GM12878 (cell line): ENCODE measurements at regions of chr18 and their contacts with region 1.

Region 1: DNA sequence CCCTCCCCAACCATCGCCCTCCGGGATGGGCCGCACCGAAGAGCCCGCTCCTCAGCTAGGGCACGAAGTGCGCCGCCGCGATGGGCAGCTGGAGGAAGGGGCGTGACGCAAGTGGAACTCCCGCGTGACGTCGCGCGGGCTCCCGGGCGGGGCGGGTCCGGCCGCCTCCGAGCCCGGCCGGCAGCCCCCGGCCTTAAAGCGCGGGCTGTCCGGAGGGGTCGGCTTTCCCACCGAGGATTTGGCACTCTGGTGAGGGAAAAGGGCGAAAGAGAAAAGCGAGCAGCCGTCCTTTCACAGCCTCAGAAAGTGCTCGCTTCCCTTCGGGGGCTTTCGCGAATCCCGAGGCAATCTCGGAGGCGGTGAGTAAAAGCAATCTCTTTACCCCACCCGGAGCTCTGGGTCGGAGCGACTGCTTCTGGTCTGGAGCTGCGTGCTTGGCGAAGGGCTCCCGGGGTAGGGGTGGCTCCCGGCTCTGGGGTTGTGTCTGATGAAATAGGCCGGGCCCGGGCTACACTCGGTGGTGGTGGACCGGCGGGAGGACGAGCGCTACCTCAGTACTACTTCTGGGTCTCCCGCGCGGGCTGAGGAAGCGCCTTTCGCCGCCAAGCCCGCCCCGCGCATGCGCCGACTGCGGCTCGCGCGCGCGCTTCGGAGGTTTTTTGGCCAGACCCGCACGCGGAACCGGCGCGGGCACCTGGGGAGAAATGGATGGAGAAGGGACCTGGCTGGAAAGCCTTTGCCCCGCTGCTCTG is at the start of gene RBBP8:
- DNase-seq: peak; percentile 36
- ATAC-seq: peak; percentile 85
- H3K4me3 ChIP-seq: peak within 1 kb of the TSS; percentile 86
- H3K27ac ChIP-seq: peak within 1 kb of the TSS; percentile 92
- H3K4me1 ChIP-seq: peaks cover 6% of the 10 kb centered on the region
- H3K27me3 ChIP-seq: no peaks in the 10 kb centered on the region
- CTCF ChIP-seq: no peak
- EP300 ChIP-seq: no peak
- POLR2A ChIP-seq: peak; percentile 80
- RAD21 ChIP-seq: no peak
- polyA plus RNA-seq, gene RBBP8: 49.4 to 59.5 TPM

Region 2: GRCh38 chr18:22813648-22814328 is 119.6 kb before region 1 on chr18:
- CTCF ChIA-PET with region 1: interaction called, 19 read pairs
- POLR2A ChIA-PET with region 1: interaction called, 3 read pairs
- RAD21 ChIA-PET with region 1: interaction called, 5 read pairs
- SMC1A ChIA-PET with region 1: interaction called, 8 read pairs
- in situ Hi-C with region 1: no loop called
- intact Hi-C with region 1: loop called (anchors 2 kb)
- DNase-seq: no peak
- ATAC-seq: peak; percentile 78
- H3K4me3 ChIP-seq: no peak overlapping the region
- H3K27ac ChIP-seq: no peak overlapping the region
- H3K4me1 ChIP-seq: no peaks in the 10 kb centered on the region
- H3K27me3 ChIP-seq: no peaks in the 10 kb centered on the region
- CTCF ChIP-seq: peak; percentile 48 to 79 (median 65); a peak in 5 of 6 replicates
- EP300 ChIP-seq: no peak
- POLR2A ChIP-seq: no peak
- RAD21 ChIP-seq: peak; percentile 98

Region 3: DNA sequence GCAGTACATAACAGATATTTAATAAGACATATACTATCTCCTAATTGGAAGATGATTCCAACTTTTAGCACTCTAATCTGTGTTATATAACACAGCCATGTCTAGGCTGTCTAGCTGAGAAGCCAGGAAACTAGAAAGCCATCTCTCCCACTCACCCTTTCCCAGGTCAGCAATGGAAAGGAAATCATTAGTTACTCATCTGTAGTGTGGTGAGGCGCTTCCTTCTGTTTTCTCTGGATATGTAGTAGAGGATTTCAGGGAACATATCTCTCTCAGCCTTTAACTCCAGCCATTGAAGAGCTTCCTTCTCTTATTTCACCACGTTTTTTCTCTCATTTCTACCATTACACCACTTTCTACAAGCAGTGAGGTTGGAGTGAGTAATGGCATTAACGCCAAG is 19.1 kb after region 1 on chr18:
- CTCF ChIA-PET with region 1: interaction called, 18 read pairs
- POLR2A ChIA-PET with region 1: no interaction called
- RAD21 ChIA-PET with region 1: interaction called, 4 read pairs
- SMC1A ChIA-PET with region 1: interaction called, 11 read pairs
- in situ Hi-C with region 1: no loop called
- intact Hi-C with region 1: no loop called
- DNase-seq: no peak
- ATAC-seq: no peak
- H3K4me3 ChIP-seq: no peak overlapping the region
- H3K27ac ChIP-seq: no peak overlapping the region
- H3K4me1 ChIP-seq: no peaks in the 10 kb centered on the region
- H3K27me3 ChIP-seq: no peaks in the 10 kb centered on the region
- CTCF ChIP-seq: no peak
- EP300 ChIP-seq: no peak
- POLR2A ChIP-seq: no peak
- RAD21 ChIP-seq: no peak

Region 4: DNA sequence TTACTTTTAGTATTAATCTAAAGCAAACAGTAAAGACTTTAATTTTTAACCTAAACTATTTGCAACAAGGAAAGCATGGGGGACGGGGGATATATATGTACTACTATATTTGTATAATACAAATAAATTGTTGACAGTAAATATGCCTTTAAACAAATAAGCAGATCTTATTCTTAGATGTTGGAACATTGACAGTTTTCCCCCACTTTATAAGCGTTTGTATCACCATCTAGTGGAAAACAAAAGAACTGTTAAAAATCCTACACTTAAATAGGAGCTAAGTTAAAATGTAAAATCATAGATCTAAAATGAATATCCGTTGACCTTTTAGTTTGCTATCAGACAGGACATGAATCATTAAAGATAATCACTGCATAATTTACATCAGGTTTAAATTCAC is 49.8 kb after region 1 on chr18:
- CTCF ChIA-PET with region 1: interaction called, 103 read pairs
- POLR2A ChIA-PET with region 1: interaction called, 11 read pairs
- RAD21 ChIA-PET with region 1: interaction called, 52 read pairs
- SMC1A ChIA-PET with region 1: interaction called, 74 read pairs
- in situ Hi-C with region 1: no loop called
- intact Hi-C with region 1: loop called (anchors 2 kb)
- DNase-seq: no peak
- ATAC-seq: peak; percentile 50
- H3K4me3 ChIP-seq: no peak overlapping the region
- H3K27ac ChIP-seq: no peak overlapping the region
- H3K4me1 ChIP-seq: peaks cover 7% of the 10 kb centered on the region
- H3K27me3 ChIP-seq: no peaks in the 10 kb centered on the region
- CTCF ChIP-seq: peak; percentile 27 to 57 (median 34); a peak in 4 of 6 replicates
- EP300 ChIP-seq: no peak
- POLR2A ChIP-seq: no peak
- RAD21 ChIP-seq: peak; percentile 73

Region 5: GRCh38 chr18:23377669-23378301 is 444.4 kb after region 1 on chr18:
- CTCF ChIA-PET with region 1: interaction called, 11 read pairs
- POLR2A ChIA-PET with region 1: no interaction called
- RAD21 ChIA-PET with region 1: no interaction called
- SMC1A ChIA-PET with region 1: interaction called, 6 read pairs
- in situ Hi-C with region 1: no loop called
- intact Hi-C with region 1: no loop called
- DNase-seq: peak; percentile 39
- ATAC-seq: peak; percentile 88
- H3K4me3 ChIP-seq: no peak overlapping the region
- H3K27ac ChIP-seq: no peak overlapping the region
- H3K4me1 ChIP-seq: peaks cover 2% of the 10 kb centered on the region; the same call in 1 of the 2 replicates
- H3K27me3 ChIP-seq: no peaks in the 10 kb centered on the region
- CTCF ChIP-seq: no peak
- EP300 ChIP-seq: 0 out of 4 replicates have a peak, but pooled peaks of 1 of the 2 experiments have one; percentile 31
- POLR2A ChIP-seq: no peak
- RAD21 ChIP-seq: no peak